Right ventricle myocardium superior (tissue), 1 donor: ENCODE measurements at regions of chr14 and their contacts with region 1.

Region 1: GRCh38 chr14:64294672-64295413 is 672 bp upstream of the ESR2 start:
- DNase-seq: peak; percentile 81
- ATAC-seq: peak; percentile 98

Region 2: GRCh38 chr14:63795532-63795931 is 499.3 kb before region 1 on chr14:
- intact Hi-C with region 1: loop called (anchors 10 kb)
- DNase-seq: no peak
- ATAC-seq: no peak

Region 3: GRCh38 chr14:64159588-64159987 is 135.3 kb before region 1 on chr14:
- intact Hi-C with region 1: loop called (anchors 2 kb)
- DNase-seq: no peak
- ATAC-seq: no peak

Region 4: DNA sequence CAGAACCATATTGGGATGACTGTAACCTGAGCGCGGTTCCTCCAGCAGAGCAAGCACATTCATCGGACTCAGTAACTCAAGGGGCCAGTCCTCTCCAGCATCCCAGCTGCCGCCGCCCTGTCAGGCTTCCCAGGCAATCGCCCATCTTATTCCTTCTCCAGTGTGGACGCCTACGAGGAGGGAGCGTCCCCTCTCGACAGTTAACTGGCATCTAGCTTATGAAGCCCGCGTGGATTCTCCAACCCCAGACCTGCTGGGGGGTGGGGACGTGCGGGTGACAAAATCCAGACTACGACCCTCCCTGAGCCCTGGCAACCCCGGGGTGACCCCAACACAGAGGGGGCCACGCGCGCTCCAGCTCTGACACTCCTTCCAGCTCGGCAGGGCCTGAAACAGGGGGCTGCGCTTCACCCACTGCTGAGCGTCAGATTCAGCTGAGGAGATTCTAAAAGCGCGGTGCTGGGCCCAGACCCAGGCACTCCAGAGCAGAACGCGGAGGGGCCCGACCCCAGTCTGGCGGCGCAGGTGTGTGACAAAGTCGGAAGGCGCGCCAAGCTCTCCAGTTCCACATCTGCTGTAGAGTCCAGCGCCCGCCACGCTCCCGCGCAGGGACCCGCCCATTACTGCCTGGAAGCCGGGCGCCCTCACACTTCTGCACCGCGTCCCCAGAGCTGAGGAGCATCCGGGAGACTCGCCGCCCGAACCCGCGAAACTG is 43.2 kb after region 1 on chr14:
- intact Hi-C with region 1: no loop called
- DNase-seq: peak; percentile 50
- ATAC-seq: peak; percentile 76